WTC11 (cell line): ENCODE measurements at regions of chr19 and their contacts with region 1.

Region 1: GRCh38 chr19:3526507-3527244 is 12.3 kb upstream of the TEKTIP1 start:
- DNase-seq: no peak
- ATAC-seq: 0 out of 2 replicates have a peak, but pooled peaks have one; percentile 35
- H3K4me3 Mint-ChIP-seq: no peak overlapping the region
- H3K27ac Mint-ChIP-seq: no peak overlapping the region
- H3K4me1 Mint-ChIP-seq: no peaks in the 10 kb centered on the region
- H3K27me3 Mint-ChIP-seq: no peaks in the 10 kb centered on the region
- CTCF ChIP-seq: peak; percentile 26; the same call in 1 of the 2 replicates

Region 2: DNA sequence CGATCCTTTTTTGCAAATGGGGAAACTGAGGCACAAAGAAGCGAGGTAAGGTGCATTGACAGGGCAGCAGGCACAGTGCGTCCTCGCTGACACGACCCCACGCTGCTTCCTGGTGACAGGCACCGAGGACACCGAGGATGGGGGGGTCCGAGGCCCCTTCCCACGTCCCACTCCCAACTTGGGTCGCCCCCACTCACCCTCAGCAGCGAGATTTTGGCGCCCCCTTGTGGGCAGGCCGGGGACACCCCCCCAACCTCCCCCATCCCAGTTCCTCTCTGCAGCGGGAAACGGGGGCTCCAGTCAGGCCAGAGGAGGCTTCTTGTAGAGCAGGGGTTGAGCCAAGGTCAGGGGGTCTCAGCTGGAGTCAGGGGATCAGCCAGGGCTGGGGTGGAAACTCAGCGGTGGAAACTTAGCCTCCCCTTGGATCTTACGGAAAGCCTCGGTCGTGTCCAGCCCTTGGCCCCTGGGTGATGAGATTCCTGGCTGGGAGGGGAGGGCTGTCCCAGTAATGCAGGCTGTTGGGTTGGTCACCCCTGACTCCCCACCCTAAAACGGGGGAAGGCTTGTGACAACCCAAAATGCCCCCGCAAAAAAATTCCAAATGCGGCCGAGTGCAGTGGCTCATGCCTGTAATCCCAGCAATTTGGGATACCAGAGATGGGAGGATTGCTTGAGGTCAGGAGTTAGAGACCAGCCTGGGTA is 54.6 kb before region 1 on chr19:
- CTCF ChIA-PET with region 1: no interaction called
- POLR2A ChIA-PET with region 1: no interaction called
- DNase-seq: peak; percentile 68
- ATAC-seq: peak; percentile 76
- H3K4me3 Mint-ChIP-seq: no peak overlapping the region
- H3K27ac Mint-ChIP-seq: no peak overlapping the region
- H3K4me1 Mint-ChIP-seq: no peaks in the 10 kb centered on the region
- H3K27me3 Mint-ChIP-seq: peaks cover 37% of the 10 kb centered on the region
- CTCF ChIP-seq: peak; percentile 89

Region 3: GRCh38 chr19:3538965-3539742 is 12.5 kb after region 1 on chr19 and contains the start of gene TEKTIP1:
- CTCF ChIA-PET with region 1: interaction called, 22 read pairs
- POLR2A ChIA-PET with region 1: no interaction called
- DNase-seq: peak; percentile 34
- ATAC-seq: peak; percentile 43
- H3K4me3 Mint-ChIP-seq: no peak within 1 kb of the TSS
- H3K27ac Mint-ChIP-seq: peak within 1 kb of the TSS; percentile 53; the same call in 1 of the 2 replicates
- H3K4me1 Mint-ChIP-seq: peaks cover 9% of the 10 kb centered on the region
- H3K27me3 Mint-ChIP-seq: no peaks in the 10 kb centered on the region
- CTCF ChIP-seq: no peak
- total RNA-seq, gene TEKTIP1: 3.3 to 6.3 TPM (median 4.7 TPM) in 3 replicates

Region 4: DNA sequence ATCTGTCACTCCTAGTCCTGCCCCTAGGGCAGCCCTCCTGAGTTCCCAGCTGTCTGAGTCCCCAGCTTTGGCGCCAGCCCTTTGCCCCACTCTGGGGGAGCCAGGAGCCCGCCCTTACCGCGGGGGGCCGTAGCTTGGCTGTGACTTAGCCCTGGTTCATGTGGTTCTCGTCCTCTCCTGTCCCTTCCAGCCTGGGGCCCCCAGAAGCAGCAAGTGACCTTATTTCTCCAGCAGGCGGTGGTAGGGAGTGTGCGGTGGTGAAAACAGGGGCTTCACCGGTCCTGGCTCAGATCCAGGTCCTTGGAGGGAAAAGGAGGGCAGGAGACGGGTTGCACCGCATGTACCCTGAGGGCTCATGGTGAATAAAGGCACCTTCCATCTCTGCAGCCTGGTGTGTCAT is 66.5 kb after region 1 on chr19:
- CTCF ChIA-PET with region 1: no interaction called
- POLR2A ChIA-PET with region 1: no interaction called
- DNase-seq: peak; percentile 69
- ATAC-seq: peak; percentile 95
- H3K4me3 Mint-ChIP-seq: no peak overlapping the region
- H3K27ac Mint-ChIP-seq: no peak overlapping the region
- H3K4me1 Mint-ChIP-seq: no peaks in the 10 kb centered on the region
- H3K27me3 Mint-ChIP-seq: peaks cover 27% of the 10 kb centered on the region
- CTCF ChIP-seq: no peak